Posterior vena cava (tissue), 2 donors: ENCODE measurements at regions of chr9 and their contacts with region 1.

Region 1: DNA sequence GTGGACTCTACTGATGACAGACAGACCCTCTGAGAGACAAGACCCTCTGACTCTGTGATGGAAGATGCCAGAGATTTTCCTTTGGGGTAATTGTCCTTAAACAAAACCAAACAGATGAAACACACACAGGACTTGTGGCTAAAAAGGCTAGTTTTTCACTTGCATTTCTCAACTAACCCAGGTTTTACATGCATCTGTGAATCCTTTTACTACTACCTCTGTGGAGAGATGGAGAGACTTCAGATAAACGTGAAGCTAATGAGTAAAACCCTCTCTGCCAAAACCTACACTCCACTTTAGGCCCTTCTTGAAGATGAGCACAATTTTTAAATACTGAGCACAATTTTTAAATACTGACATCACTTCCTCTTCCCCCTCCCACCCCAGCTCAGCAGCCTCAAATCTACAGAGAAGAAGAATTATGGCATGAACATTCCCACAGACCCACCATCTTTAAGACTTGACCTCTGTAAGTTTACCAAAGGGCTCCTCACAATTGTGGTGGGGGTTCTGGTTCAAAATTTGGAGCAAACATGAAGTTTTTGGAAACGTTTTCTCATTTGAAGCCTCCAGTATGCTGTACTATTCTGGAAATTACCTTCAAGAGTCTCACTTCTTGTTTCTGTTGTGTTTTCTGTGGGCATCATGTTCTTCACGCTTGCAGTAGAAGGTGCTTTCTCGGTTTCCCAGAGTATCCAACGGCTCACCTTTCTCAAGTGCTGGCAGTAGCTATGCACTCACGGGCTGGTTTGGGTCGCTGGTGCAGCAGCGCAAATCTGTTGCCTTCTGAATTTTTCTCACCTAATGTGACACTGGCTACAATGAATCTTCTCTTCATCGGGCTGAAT is 42.7 kb downstream of the ACER2 start:
- DNase-seq: no peak

Region 2: GRCh38 chr9:19411316-19411715 is 40.1 kb before region 1 on chr9:
- intact Hi-C with region 1: no loop called
- DNase-seq: no peak

Region 3: DNA sequence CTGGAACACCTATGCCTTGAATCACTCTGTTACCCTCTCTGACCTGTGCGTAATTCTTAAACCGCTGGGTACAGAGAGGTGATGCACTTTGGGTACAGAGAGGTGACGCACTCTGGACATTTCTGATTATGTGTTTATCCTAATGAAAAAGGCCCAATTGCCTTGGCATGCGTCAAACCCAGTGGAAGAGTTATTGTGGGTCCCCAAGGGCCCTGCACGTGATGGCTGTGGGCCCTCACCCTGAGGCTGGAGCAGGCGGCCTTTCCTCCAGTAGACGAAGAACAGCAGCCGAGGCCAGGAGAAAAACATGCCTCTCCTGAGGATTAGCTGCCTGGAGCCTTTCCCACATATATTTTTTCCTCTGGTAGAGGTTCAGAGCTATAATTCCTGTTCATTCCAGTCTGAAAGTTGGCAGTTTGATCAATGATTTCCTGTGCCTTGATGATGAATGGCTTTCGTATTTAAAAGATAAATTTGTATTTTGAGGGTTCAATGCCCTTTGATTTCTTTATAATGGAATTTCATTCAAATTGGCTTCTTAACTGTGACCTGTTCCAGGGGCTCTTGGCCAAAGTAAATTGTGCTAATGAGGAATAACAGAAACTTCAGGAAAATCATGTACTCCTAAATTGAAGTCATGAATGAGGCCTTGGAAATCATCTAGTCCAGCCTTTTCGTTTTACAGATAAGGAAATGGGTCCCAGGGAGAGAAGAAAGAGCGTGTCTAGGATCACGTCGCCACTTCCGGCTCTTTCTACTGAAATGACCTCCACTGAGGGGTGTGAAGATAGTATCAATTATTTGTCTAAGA is 19.9 kb before region 1 on chr9:
- intact Hi-C with region 1: loop called in 1 of 2 experiments (anchors 2 kb)
- DNase-seq: peak; percentile 88

Region 4: DNA sequence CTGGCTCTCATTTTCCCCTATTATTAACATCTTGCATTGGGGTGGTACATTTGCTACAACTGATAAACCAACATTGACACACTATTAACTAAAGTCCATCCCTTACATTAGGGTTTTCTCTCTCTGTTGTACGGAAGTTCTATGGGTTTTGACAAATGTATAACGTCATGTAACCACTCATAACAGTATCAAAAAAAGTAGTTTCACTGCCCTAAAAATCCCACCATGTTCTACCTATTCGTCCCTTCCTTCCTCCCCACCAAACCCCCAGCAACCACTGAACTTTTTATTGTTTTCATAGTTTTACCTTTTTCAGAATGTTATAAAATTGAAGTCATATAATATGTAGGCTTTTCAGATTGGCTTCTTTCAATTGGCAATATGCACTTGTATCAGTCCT is 1130.7 kb after region 1 on chr9:
- intact Hi-C with region 1: no loop called
- DNase-seq: no peak